KBM-7 (cell line): ENCODE measurements at regions of chr12 and their contacts with region 1.

Region 1: GRCh38 chr12:12611512-12612306 is at the start of gene CREBL2:
- DNase-seq: peak; percentile 96

Region 2: DNA sequence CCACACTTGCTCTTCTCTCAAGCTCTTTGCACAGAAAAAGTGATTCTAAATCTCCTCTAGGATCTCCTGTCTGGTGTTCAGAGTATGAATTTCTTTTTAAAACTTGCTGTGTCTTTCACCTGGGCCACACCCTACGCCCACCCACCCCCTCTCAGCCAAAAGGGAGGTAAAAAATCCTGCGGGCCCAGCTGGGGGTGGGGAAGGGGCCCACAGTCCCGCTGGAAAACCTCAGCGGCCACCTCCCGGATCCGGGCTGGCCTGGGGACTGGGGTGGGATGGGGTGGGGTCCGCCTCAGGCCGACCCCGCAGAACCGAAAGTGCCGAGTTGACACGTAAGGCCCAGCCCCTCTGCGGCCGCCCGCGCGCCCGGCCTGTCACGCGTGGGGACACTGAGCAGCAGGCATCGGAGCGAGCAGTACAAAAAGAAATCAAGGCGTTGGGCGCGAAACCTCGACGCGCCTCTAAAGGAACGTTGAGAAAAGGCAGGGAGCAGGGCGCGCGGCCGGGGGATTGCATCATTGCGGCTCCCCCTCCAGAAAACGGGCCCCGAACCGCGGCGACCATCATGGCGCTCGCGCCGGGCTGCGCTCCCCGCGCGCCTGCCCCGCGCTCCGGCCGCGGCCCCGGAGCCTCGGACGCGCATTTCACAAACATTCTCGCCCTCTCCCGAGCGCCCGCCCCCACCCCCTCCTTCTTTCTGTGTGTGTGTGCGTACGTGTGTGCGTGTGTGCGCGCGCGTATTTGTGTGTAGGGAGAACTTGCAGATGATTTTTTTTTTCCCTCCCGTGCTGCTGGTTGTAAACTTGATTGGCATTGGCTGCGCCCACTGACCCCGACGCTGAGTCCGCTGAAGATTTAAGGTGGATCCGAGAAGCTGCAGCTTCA is 113.2 kb after region 1 on chr12:
- in situ Hi-C with region 1: loop called (anchors 25 kb)
- DNase-seq: peak; percentile 99